ENCODE measurements at regions of chr11 and their contacts with region 1.

Region 1: DNA sequence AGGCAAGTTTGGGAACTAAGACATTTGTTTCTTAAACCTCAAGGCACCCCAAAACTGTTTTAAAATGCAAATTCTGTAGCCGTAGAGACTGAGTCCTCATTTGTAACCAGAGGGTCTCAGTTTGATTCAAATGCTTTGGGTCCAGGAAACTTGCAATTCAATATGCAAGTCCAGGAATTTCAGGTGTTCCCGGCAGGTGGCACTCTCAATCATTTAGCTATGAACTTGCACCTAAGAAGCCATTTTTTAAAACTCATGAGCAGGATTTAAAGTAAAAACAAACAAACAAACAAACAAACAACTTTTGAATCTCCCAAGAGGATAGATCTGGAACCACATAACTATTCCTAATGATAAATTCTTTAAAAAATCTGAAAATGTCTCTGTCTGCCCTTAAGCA is 8.7 kb upstream of the ABTB2 start:
- DNase-seq: no peak

Region 2: DNA sequence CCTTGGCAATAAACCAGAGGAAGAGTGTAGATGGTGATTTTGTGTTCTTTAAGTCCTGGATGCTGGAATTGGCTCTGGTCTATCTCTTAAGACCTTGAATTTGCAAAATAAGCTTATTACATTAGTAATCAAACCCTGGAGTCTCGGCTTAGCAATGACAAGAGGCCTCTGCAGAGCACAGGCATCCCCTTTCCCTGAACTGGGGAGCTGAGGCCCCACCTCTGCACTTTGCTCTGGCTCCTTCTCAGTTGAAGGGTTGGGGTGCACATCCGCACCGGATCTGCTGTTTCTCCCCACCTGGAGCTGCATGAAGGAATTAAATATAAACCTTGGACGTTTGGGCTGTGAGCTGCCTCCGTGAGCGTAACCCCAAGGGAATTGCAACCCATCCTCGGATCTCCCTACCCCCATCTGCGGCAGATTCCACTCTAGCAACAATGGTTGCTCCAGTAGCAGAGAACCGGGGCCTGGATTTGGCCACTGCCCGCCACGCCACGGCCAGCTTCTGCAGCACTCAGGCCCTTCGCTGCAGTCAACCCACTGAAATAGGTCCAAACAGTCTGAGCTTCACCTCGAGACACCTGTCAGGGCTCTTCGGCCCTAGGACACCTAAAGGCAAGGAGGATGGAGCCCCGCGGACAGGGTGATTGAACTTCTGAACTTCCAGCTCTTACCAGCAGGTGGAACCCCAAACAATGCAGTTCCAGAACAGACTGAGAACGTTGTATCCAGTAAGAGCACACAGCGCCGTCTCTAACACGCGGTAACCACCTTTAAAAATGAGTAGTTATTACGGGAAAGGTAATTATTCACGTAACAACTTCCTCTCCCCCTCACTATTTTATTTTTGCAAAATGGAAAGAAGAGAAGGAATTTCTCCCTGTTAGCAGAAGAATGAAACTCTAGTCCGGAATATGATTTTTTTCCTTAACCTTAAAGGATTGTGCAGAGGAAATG is 369.7 kb before region 1 on chr11:
- intact Hi-C with region 1: loop called (anchors 5 kb)
- DNase-seq: peak; percentile 27 to 92 (median 78)

Region 3: DNA sequence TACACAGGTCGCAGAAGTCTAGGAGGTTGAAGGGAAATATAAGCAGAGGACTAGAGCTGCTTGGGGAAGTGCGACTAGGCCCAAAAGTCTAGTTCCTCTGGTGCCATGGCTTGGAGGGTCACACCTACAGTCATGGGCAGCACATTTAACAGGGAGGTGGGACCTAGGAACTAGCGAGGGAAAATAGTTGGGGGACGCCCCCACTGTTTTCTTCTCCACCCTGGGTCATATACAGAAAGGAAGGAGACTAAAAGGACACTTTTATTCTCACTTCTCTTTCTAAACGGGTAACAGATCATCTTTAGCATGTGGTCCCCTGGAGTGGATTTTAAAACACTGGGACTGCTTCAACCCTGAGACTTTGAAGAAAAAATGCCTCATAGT is 533.1 kb after region 1 on chr11:
- intact Hi-C with region 1: loop called (anchors 10 kb)
- DNase-seq: no peak

Measured in head of caudate nucleus (tissue), 42 donors.